Left cardiac atrium (tissue), 4 donors: ENCODE measurements at regions of chr13 and their contacts with region 1.

Region 1: GRCh38 chr13:99442273-99442895 is 58.9 kb upstream of the TM9SF2 start:
- DNase-seq: no peak
- ATAC-seq: peak in 1 of 2 donors; percentile 53

Region 2: GRCh38 chr13:99505814-99506269 is 63.5 kb after region 1 on chr13:
- intact Hi-C with region 1: loop called in 1 of 2 experiments (anchors 5 kb)
- DNase-seq: no peak
- ATAC-seq: no peak

Region 3: DNA sequence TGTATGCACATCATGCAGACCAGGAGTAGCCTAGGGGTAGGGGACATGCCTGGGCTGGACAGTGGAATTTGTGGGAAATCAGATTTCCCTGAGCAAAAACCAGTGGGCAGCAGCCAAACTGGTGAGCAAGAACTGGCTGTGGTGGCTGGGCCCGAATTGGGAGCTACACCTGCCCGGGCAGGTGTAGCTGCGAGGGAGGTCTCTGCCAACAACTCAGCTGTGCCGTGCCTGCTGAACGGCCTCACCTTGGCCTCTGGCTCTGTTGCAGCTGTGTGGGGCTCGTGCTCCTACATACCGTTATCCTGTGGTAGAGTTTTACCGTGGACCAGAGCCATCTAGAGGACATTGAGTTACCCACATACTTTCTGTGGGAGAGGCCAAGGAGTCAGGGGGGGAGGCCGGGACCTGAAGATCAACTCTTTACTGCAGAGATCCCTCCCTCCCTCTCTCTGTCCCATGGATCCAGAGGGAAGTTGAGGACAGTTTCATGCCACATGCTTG is 172.1 kb after region 1 on chr13:
- intact Hi-C with region 1: loop called (anchors 5 to 10 kb)
- DNase-seq: no peak
- ATAC-seq: peak; percentile 51 to 59